ENCODE measurements at regions of chr17 and their contacts with region 1.

Region 1: GRCh38 chr17:46841561-46842379 is 9.6 kb upstream of the WNT9B start:
- DNase-seq: no peak
- ATAC-seq: peak; percentile 85
- H3K4me3 ChIP-seq: peak overlapping the region; percentile 15; the same call in 1 of the 2 replicates
- H3K27ac ChIP-seq: no peak overlapping the region
- H3K4me1 ChIP-seq: no peaks in the 10 kb centered on the region
- H3K27me3 ChIP-seq: peaks cover 34% of the 10 kb centered on the region
- CTCF ChIP-seq: peak; percentile 65
- POLR2A ChIP-seq: no peak
- RAD21 ChIP-seq: peak; percentile 53

Region 2: GRCh38 chr17:46995841-46996571 is 154.2 kb after region 1 on chr17:
- CTCF ChIA-PET with region 1: interaction called, 4 read pairs
- POLR2A ChIA-PET with region 1: no interaction called
- dilution Hi-C with region 1: no loop called
- in situ Hi-C with region 1: no loop called
- intact Hi-C with region 1: loop called (anchors 1 kb)
- DNase-seq: peak; percentile 59
- ATAC-seq: peak; percentile 35; the same call in 1 of the 2 replicates
- H3K4me3 ChIP-seq: no peak overlapping the region
- H3K27ac ChIP-seq: no peak overlapping the region
- H3K4me1 ChIP-seq: no peaks in the 10 kb centered on the region
- H3K27me3 ChIP-seq: peaks cover 2% of the 10 kb centered on the region; the same call in 1 of the 2 replicates
- CTCF ChIP-seq: no peak
- POLR2A ChIP-seq: no peak
- RAD21 ChIP-seq: no peak

Measured in IMR-90 (cell line).